Esophagus squamous epithelium (tissue), 5 donors: ENCODE measurements at regions of chr1 and their contacts with region 1.

Region 1: GRCh38 chr1:180188091-180188506 is 33.4 kb downstream of the QSOX1 start:
- DNase-seq: no peak
- H3K4me3 ChIP-seq: no peak overlapping the region
- H3K27ac ChIP-seq: no peak overlapping the region
- H3K4me1 ChIP-seq: no peaks in the 10 kb centered on the region
- H3K27me3 ChIP-seq: no peaks in the 10 kb centered on the region
- CTCF ChIP-seq: peak in 5 of 6 experiments; percentile 44 to 70 (median 50)
- POLR2A ChIP-seq: no peak

Region 2: GRCh38 chr1:179867807-179868330 is 320.2 kb before region 1 on chr1:
- intact Hi-C with region 1: loop called (anchors 10 kb)
- DNase-seq: no peak
- H3K4me3 ChIP-seq: no peak overlapping the region
- H3K27ac ChIP-seq: no peak overlapping the region
- H3K4me1 ChIP-seq: peaks cover 0 to 16% (median 3%) of the 10 kb centered on the region in 3 donors
- H3K27me3 ChIP-seq: no peaks in the 10 kb centered on the region
- CTCF ChIP-seq: peak; percentile 17 to 60 (median 52)
- POLR2A ChIP-seq: no peak

Region 3: GRCh38 chr1:180482425-180483275 is 294.6 kb after region 1 on chr1:
- intact Hi-C with region 1: loop called (anchors 10 kb)
- DNase-seq: no peak
- H3K4me3 ChIP-seq: no peak overlapping the region
- H3K27ac ChIP-seq: no peak overlapping the region
- H3K4me1 ChIP-seq: peaks cover 0 to 5% (median 0%) of the 10 kb centered on the region in 3 donors
- H3K27me3 ChIP-seq: no peaks in the 10 kb centered on the region
- CTCF ChIP-seq: peak in 5 of 6 experiments; percentile 37 to 71 (median 63)
- POLR2A ChIP-seq: no peak